ENCODE measurements at regions of chr1 and their contacts with region 1.

Region 1: DNA sequence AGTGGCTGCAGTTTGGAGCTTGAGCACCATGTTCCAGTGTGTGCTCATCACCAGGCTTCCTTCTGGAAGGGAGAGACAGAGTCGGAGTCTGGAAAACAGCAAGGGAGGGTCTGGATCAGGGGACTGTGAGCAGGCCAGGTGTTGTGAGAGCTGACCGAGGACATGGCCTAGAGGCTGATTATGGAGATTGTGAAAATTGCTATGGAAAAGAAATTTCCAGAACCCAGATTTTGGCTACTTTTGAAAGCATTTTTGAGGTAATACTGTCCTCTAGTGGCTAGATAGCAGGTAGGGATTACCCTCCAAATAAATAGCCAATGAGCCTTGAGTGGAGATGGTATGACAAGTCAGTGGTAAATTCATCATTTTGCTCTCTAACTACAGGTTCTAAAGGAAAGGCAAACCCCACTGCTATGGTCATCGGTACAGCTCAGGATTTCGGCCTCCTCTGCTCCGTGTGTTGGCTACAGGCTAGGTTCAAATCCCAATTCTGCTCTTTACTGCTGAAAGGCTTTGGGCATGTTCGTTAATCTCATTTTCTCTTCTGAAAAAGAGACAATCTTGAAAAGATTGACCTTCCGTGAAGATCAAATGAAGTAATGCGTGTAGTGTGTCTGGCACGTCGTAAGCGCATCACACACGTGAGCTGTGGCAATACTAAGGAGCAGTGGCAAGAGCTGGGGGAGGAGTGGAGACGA is 1.0 kb upstream of the HAO2 start:
- DNase-seq: no peak

Region 2: DNA sequence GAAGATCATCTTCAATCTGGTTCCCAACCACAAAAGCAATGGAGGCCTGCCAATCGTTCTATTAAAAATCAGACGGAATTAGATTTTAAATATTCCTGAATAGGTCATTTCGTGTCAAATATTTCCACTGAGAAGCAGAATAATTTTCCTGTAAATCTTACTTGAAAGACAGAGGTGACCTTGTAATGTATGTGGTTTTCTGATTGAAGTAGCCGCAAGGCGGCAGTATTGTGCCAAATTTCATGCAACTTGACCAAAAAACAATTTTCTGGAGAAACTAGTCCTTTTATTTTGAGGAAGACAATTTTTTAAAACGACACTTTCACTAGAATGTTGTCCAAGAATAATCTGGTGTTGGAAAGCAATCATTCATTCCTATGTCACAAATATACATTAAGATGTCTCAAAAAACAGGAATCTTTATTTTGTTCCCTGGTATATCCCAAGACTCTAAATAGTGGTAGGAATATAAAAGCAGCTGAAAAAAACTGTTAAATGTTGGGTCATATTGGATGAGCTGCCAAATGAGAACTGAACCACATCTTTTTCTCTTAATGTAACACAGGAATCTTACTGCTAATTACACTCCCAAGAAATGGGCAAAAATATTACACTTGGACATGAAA is 1216.2 kb before region 1 on chr1:
- intact Hi-C with region 1: loop called (anchors 5 kb)
- DNase-seq: no peak

Region 3: DNA sequence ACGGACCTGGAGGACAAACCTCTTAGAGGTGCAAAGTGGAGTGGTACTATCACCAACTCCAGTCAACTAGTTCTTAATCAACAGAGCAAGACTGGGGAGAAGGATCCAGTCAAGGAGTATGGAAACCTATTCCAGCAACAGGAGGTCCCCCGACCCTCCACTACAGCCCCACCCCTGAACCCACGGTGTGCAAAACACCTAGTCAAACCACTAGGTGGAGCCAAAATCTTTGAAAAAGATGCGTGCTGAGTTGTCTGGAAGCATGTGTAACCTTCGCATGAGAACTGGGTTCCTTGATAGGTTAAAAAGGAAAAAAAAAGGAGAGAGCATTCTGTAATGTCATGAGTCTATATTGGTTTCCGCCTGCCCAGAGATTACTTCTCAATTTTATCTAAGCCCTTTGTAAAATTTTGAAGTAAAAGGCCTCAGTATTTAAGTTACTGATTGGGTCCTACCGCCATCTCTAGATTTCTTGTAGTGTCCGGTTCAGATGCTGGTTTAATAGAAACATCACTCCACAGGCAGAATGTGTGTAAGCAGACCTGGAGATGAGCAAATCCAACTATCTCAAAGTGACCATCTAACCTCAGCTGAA is 80.9 kb before region 1 on chr1:
- intact Hi-C with region 1: loop called (anchors 5 kb)
- DNase-seq: no peak

Measured in cardiac septum (tissue), 1 donor.